ENCODE measurements at regions of chr17 and their contacts with region 1.

Region 1: DNA sequence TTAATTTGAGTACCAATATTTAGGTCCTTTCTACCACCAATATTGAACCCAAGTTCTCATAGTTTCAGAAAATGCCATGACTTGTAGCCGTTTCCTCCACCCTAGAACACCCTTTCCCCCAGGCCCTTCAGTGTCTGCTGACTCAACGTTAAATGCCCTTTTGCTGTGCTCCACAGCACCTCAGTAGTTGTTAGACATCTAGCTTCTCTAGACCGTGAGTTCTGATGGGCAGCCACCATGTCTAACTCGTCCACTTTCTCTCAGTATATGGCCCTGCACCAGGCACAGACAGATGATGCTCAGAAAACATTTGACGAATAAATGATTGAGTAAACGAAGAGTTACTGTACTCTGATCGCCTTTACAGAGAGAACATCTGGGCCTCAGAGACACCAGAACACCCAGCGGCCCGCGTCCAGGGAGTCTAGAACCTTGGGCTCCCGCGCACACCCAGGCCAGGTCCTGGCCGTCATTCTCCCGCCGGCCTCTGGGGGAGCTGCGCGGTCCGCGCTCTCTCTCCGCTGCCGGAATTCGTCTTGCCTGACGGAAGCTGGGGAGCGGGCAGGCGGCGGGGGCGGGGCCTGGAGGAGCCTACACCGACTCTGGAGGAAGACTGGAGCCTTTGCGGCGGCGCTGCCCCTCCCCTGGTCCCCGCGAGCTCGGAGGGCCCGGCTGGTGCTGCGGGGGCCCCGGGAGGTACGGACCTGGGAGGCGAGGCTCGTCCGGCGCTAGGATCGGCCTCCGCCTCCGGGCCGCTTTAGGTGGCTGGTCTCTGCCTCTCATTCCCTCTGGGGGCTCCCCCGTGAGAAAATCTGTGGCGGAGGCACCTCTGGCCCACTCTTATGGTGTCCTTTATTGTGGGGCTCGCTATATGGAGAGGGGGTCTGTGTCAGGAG is at the start of gene NKIRAS2:
- DNase-seq: peak; percentile 96
- ATAC-seq: peak; percentile 81
- H3K4me3 Mint-ChIP-seq: peak within 1 kb of the TSS; percentile 97
- H3K27ac Mint-ChIP-seq: peak within 1 kb of the TSS; percentile 79
- H3K4me1 Mint-ChIP-seq: peaks cover 50% of the 10 kb centered on the region
- H3K27me3 Mint-ChIP-seq: no peaks in the 10 kb centered on the region
- CTCF ChIP-seq: peak; percentile 95
- total RNA-seq, gene NKIRAS2: 13.8 to 15.0 TPM

Region 2: DNA sequence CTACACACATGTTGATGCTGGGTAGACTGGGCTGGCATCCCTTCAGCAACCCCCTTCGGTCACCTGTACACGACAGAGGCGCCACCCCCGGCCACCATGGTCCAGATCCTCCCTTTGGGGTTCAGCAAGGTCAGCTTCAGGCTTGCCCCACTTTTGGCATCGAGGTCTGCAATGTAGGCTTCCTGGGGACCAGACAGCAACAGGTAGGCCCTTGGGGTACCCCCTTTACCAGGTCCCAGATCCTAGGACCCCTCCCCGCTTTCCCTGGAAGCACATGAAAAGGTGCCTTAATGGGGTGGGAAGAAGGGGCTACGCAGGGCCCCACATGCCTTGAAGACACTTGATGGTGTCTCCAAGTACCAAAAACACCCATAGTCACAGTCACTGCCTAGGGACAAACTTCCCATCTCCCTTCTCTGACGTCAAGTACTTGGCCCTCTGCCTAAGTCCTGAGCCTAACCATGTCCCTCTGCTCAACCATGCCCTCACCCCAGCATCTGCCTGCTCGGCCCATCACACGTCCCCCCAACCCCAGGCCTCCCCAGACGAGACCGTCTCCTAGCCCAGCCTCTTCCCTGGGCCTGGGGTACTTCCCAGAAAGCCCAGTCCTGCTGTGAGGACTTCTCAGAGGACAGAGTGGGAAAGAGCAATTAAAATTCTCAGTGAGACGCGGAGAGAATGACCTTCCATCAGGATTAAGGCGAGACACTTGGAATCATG is 113.1 kb before region 1 on chr17:
- CTCF ChIA-PET with region 1: no interaction called
- POLR2A ChIA-PET with region 1: no interaction called
- intact Hi-C with region 1: no loop called
- DNase-seq: no peak
- ATAC-seq: no peak
- H3K4me3 Mint-ChIP-seq: no peak overlapping the region
- H3K27ac Mint-ChIP-seq: no peak overlapping the region
- H3K4me1 Mint-ChIP-seq: no peaks in the 10 kb centered on the region
- H3K27me3 Mint-ChIP-seq: no peaks in the 10 kb centered on the region
- CTCF ChIP-seq: no peak

Region 3: GRCh38 chr17:41918314-41919164 is 101.2 kb before region 1 on chr17 and contains the start of gene ACLY:
- CTCF ChIA-PET with region 1: interaction called, 10 read pairs
- POLR2A ChIA-PET with region 1: interaction called, 6 read pairs
- intact Hi-C with region 1: no loop called
- DNase-seq: peak; percentile 97
- ATAC-seq: peak; percentile 99
- H3K4me3 Mint-ChIP-seq: peak within 1 kb of the TSS; percentile 95
- H3K27ac Mint-ChIP-seq: peak within 1 kb of the TSS; percentile 93
- H3K4me1 Mint-ChIP-seq: peaks cover 34% of the 10 kb centered on the region
- H3K27me3 Mint-ChIP-seq: no peaks in the 10 kb centered on the region
- CTCF ChIP-seq: no peak
- total RNA-seq, gene ACLY: 185 to 186 TPM

Region 4: GRCh38 chr17:41966463-41967140 is 53.2 kb before region 1 on chr17 and contains the start of gene CNP:
- CTCF ChIA-PET with region 1: interaction called, 17 read pairs
- POLR2A ChIA-PET with region 1: interaction called, 41 read pairs
- intact Hi-C with region 1: no loop called
- DNase-seq: peak; percentile 92
- ATAC-seq: peak; percentile 82
- H3K4me3 Mint-ChIP-seq: peak within 1 kb of the TSS; percentile 82
- H3K27ac Mint-ChIP-seq: peak within 1 kb of the TSS; percentile 88
- H3K4me1 Mint-ChIP-seq: peaks cover 38% of the 10 kb centered on the region
- H3K27me3 Mint-ChIP-seq: no peaks in the 10 kb centered on the region
- CTCF ChIP-seq: no peak
- total RNA-seq, gene CNP: 50.1 to 54.5 TPM

Region 5: GRCh38 chr17:42005166-42005565 is 14.6 kb before region 1 on chr17:
- CTCF ChIA-PET with region 1: interaction called, 11 read pairs
- POLR2A ChIA-PET with region 1: interaction called, 5 read pairs
- intact Hi-C with region 1: no loop called
- DNase-seq: no peak
- ATAC-seq: no peak
- H3K4me3 Mint-ChIP-seq: no peak overlapping the region
- H3K27ac Mint-ChIP-seq: peak overlapping the region; percentile 48
- H3K4me1 Mint-ChIP-seq: peaks cover 40% of the 10 kb centered on the region
- H3K27me3 Mint-ChIP-seq: no peaks in the 10 kb centered on the region
- CTCF ChIP-seq: no peak

Region 6: GRCh38 chr17:42101513-42102319 is 82.0 kb after region 1 on chr17:
- CTCF ChIA-PET with region 1: interaction called, 65 read pairs
- POLR2A ChIA-PET with region 1: interaction called, 5 read pairs
- intact Hi-C with region 1: no loop called
- DNase-seq: peak; percentile 90
- ATAC-seq: peak; percentile 89
- H3K4me3 Mint-ChIP-seq: no peak overlapping the region
- H3K27ac Mint-ChIP-seq: no peak overlapping the region
- H3K4me1 Mint-ChIP-seq: peaks cover 9% of the 10 kb centered on the region
- H3K27me3 Mint-ChIP-seq: peaks cover 8% of the 10 kb centered on the region
- CTCF ChIP-seq: peak; percentile 96

Region 7: GRCh38 chr17:42112552-42113176 is 92.9 kb after region 1 on chr17 and contains the start of gene DHX58:
- CTCF ChIA-PET with region 1: interaction called, 110 read pairs
- POLR2A ChIA-PET with region 1: interaction called, 36 read pairs
- intact Hi-C with region 1: loop called (anchors 5 kb)
- DNase-seq: peak; percentile 89
- ATAC-seq: peak; percentile 82
- H3K4me3 Mint-ChIP-seq: peak within 1 kb of the TSS; percentile 79
- H3K27ac Mint-ChIP-seq: peak within 1 kb of the TSS; percentile 92
- H3K4me1 Mint-ChIP-seq: peaks cover 30% of the 10 kb centered on the region
- H3K27me3 Mint-ChIP-seq: no peaks in the 10 kb centered on the region
- CTCF ChIP-seq: no peak
- total RNA-seq, gene DHX58: 31.7 to 36.2 TPM

Region 8: GRCh38 chr17:42120770-42121769 is 101.3 kb after region 1 on chr17 and contains the start of gene KAT2A:
- CTCF ChIA-PET with region 1: interaction called, 110 read pairs
- POLR2A ChIA-PET with region 1: interaction called, 7 read pairs
- intact Hi-C with region 1: no loop called
- DNase-seq: peak; percentile 84
- ATAC-seq: peak; percentile 87
- H3K4me3 Mint-ChIP-seq: peak within 1 kb of the TSS; percentile 67
- H3K27ac Mint-ChIP-seq: peak within 1 kb of the TSS; percentile 85
- H3K4me1 Mint-ChIP-seq: peaks cover 30% of the 10 kb centered on the region
- H3K27me3 Mint-ChIP-seq: no peaks in the 10 kb centered on the region
- CTCF ChIP-seq: no peak
- total RNA-seq, gene KAT2A: 49.2 to 50.2 TPM

Region 9: DNA sequence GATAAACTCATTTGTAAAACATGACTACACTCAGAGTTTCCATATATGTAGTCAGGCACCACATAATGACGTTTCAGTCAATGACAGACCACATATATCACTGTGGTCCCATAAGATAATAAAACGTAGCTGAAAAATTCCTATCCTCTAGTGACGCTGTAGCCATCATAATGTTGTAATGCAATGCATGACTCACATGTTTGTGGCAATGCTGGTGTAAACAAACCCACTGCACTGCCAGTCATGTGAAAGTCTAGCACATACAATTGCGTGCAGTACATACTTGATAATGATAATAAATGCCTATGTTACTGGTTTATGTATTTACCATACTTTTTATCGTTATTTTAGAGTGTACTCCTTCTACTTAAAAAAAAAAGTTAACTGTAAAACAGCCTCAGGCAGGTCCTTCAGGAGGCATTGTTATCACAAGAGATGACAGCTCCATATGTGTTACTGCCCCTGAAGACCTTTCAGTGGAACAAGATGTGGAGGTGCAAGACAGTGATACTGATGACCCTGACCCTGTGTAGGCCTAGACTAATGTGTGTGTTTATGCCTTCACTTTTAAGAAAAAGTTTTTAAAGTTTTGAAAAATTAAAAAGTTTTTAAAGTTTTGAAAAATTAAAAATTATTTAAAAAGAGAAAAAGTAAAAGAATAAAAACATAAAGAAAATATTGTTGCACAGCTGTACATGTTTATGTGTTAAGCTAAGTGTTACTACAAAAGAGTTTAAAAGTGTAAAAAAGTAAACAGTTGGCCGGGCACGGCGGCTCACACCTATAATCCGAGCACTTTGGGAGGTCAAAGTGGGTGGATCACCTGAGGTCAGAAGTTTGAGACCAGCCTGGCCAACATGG is 247.4 kb after region 1 on chr17:
- CTCF ChIA-PET with region 1: no interaction called
- POLR2A ChIA-PET with region 1: no interaction called
- intact Hi-C with region 1: no loop called
- DNase-seq: peak; percentile 74
- ATAC-seq: peak; percentile 85
- H3K4me3 Mint-ChIP-seq: peak overlapping the region; percentile 27
- H3K27ac Mint-ChIP-seq: peak overlapping the region; percentile 96
- H3K4me1 Mint-ChIP-seq: peaks cover 61% of the 10 kb centered on the region
- H3K27me3 Mint-ChIP-seq: no peaks in the 10 kb centered on the region
- CTCF ChIP-seq: no peak